ENCODE measurements at regions of chr4 and their contacts with region 1.

Region 1: DNA sequence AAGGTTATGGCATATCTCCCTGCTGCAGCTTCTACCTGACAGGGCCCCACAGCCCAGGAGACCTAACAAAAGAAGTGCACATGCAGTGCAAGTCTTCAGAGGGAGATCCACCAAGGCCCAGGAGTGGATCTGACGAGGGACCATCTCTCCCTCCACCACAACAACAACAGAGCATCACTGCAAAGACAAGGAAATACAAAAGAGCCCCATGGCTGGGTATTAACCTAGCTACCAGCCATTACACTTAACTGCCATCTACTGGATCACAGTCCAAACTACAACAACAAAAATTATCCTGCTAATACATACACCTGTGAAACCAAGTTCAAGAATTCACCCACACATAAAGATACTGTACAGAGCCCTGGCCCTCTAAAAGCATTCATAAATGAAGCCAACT is 280.2 kb upstream of the SLC7A11 start:
- DNase-seq: peak; percentile 6
- ATAC-seq: peak; percentile 81
- H3K4me3 ChIP-seq: no peak overlapping the region
- H3K27ac ChIP-seq: no peak overlapping the region
- H3K4me1 ChIP-seq: no peaks in the 10 kb centered on the region
- H3K27me3 ChIP-seq: no peaks in the 10 kb centered on the region
- CTCF ChIP-seq: peak; percentile 35 to 54 (median 43); a peak in 4 of 6 replicates
- POLR2A ChIP-seq: no peak
- RAD21 ChIP-seq: peak; percentile 70

Region 2: GRCh38 chr4:137992951-137993631 is 529.3 kb before region 1 on chr4:
- CTCF ChIA-PET with region 1: no interaction called
- POLR2A ChIA-PET with region 1: no interaction called
- RAD21 ChIA-PET with region 1: no interaction called
- intact Hi-C with region 1: no loop called
- DNase-seq: no peak
- ATAC-seq: no peak
- H3K4me3 ChIP-seq: no peak overlapping the region
- H3K27ac ChIP-seq: no peak overlapping the region
- H3K4me1 ChIP-seq: no peaks in the 10 kb centered on the region
- H3K27me3 ChIP-seq: no peaks in the 10 kb centered on the region
- CTCF ChIP-seq: no peak
- POLR2A ChIP-seq: no peak
- RAD21 ChIP-seq: no peak

Region 3: DNA sequence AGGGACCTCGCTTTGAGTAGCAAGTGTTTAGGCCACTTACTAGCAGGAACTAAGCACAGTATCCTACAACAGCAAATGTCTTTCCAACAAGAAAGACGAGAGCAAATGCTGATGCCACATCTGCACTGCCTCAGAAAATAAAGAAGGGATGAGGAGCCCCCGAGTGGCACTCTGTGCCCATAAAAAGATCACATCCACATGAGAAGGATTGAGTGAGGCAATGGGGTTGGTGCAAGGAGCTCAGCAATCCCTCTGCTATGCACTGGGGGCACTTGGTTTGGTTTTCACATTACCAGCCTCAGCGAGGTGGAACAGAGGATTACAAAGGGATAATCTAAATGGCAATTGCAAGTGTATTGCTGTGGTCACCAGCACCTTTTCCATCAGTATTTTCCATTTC is 27.4 kb before region 1 on chr4:
- CTCF ChIA-PET with region 1: interaction called, 12 read pairs
- POLR2A ChIA-PET with region 1: no interaction called
- RAD21 ChIA-PET with region 1: no interaction called
- intact Hi-C with region 1: no loop called
- DNase-seq: peak; percentile 13
- ATAC-seq: peak; percentile 92
- H3K4me3 ChIP-seq: no peak overlapping the region
- H3K27ac ChIP-seq: no peak overlapping the region
- H3K4me1 ChIP-seq: no peaks in the 10 kb centered on the region
- H3K27me3 ChIP-seq: no peaks in the 10 kb centered on the region
- CTCF ChIP-seq: peak; percentile 20 to 37 (median 33); a peak in 2 of 6 replicates
- POLR2A ChIP-seq: no peak
- RAD21 ChIP-seq: peak; percentile 57

Region 4: GRCh38 chr4:138887236-138887997 is 365.1 kb after region 1 on chr4:
- CTCF ChIA-PET with region 1: no interaction called
- POLR2A ChIA-PET with region 1: no interaction called
- RAD21 ChIA-PET with region 1: no interaction called
- intact Hi-C with region 1: no loop called
- DNase-seq: no peak
- ATAC-seq: no peak
- H3K4me3 ChIP-seq: no peak overlapping the region
- H3K27ac ChIP-seq: no peak overlapping the region
- H3K4me1 ChIP-seq: no peaks in the 10 kb centered on the region
- H3K27me3 ChIP-seq: no peaks in the 10 kb centered on the region
- CTCF ChIP-seq: no peak
- POLR2A ChIP-seq: no peak
- RAD21 ChIP-seq: no peak

Region 5: DNA sequence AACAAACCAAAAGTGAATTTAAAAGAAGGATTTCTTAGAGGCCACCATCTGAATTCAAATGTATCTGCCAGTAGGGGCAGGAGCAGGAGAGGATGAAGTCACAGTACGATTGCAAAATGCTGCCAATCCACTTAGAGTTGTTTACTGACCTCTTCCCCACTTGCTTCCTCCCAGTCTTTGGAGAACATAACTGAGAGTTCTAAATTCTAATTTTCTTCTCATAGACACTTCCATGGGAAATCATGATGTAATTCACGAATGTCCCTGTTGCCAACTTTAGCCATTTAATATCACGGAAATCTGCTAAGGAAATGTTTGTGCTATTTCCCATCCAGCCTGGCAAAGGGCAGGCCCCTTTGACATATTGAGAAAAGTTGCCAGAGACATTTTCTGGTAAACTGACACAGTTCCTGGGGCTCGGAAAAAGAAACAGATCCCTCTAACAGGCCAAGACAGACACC is 459.6 kb after region 1 on chr4:
- CTCF ChIA-PET with region 1: no interaction called
- POLR2A ChIA-PET with region 1: no interaction called
- RAD21 ChIA-PET with region 1: no interaction called
- intact Hi-C with region 1: no loop called
- DNase-seq: no peak
- ATAC-seq: peak; percentile 53; the same call in 1 of the 2 replicates
- H3K4me3 ChIP-seq: no peak overlapping the region
- H3K27ac ChIP-seq: no peak overlapping the region
- H3K4me1 ChIP-seq: peaks cover 11 to 19% of the 10 kb centered on the region in 2 experiments; a peak in 3 of 4 replicates
- H3K27me3 ChIP-seq: no peaks in the 10 kb centered on the region
- CTCF ChIP-seq: peak in 2 of 3 experiments; percentile 13 to 25; a peak in 1 of 6 replicates
- POLR2A ChIP-seq: no peak
- RAD21 ChIP-seq: no peak

Measured in HCT116 (cell line).